Activated naive CD4-positive, alpha-beta T cell treated with anti-CD3 and anti-CD28 coated beads for 36 hours (primary cell): ENCODE measurements at regions of chr18 and their contacts with region 1.

Region 1: DNA sequence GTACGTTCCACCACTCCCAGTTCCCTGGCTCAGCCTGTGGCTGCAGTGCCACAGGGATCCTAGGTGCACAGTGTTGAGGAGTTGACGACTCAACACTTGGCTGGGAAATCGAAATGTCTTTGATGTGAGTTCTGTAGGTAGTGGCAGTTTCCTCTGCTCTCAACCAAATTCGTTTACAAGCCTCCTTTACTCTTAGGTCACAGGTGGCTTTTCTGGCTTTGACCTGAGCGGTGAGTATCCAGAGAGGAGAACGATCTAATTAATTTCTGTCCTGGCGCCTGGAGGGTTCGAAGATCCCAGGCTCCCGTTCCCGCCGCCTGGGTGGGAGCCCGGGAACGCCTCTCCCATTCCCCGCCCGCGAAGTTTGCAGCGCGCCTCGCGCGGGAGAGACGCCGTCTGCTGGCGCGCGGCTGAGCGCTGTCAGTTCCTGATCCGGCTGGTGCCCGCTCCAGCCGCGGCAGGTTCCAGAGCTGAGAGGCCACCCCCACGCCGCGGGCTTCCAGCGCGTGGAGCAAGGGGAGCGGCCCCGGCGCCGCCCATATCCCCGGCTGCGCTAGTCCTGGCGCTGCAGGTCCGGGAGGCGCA is at the start of gene LAMA3:
- DNase-seq: peak; percentile 40
- H3K4me3 Mint-ChIP-seq: peak within 1 kb of the TSS; percentile 60
- H3K27ac Mint-ChIP-seq: no peak within 1 kb of the TSS
- H3K4me1 Mint-ChIP-seq: peaks cover 5% of the 10 kb centered on the region
- H3K27me3 Mint-ChIP-seq: peaks cover 31% of the 10 kb centered on the region
- total RNA-seq, gene LAMA3: 0.05 to 0.10 TPM

Region 2: GRCh38 chr18:23619388-23619881 is 69.7 kb before region 1 on chr18:
- CTCF ChIA-PET with region 1: no interaction called
- intact Hi-C with region 1: loop called (anchors 5 kb)
- DNase-seq: peak; percentile 9
- H3K4me3 Mint-ChIP-seq: peak overlapping the region; percentile 50
- H3K27ac Mint-ChIP-seq: no peak overlapping the region
- H3K4me1 Mint-ChIP-seq: no peaks in the 10 kb centered on the region
- H3K27me3 Mint-ChIP-seq: peaks cover 36% of the 10 kb centered on the region

Region 3: GRCh38 chr18:23662309-23663263 is 26.5 kb before region 1 on chr18 and contains the start of gene ANKRD29:
- CTCF ChIA-PET with region 1: interaction called, 5 read pairs
- intact Hi-C with region 1: loop called (anchors 1 kb)
- DNase-seq: peak; percentile 74
- H3K4me3 Mint-ChIP-seq: peak within 1 kb of the TSS; percentile 76
- H3K27ac Mint-ChIP-seq: no peak within 1 kb of the TSS
- H3K4me1 Mint-ChIP-seq: peaks cover 21% of the 10 kb centered on the region
- H3K27me3 Mint-ChIP-seq: peaks cover 18% of the 10 kb centered on the region
- total RNA-seq, gene ANKRD29: not detected